ENCODE measurements at regions of chr10 and their contacts with region 1.

Region 1: GRCh38 chr10:15168781-15169554 is 475 bp upstream of the NMT2 start:
- DNase-seq: peak; percentile 51 to 89
- H3K4me3 ChIP-seq: peak overlapping the region; percentile 41; the same call in 1 of the 2 replicates
- H3K27ac ChIP-seq: no peak overlapping the region
- H3K4me1 ChIP-seq: no peaks in the 10 kb centered on the region
- H3K27me3 ChIP-seq: no peaks in the 10 kb centered on the region
- CTCF ChIP-seq: no peak

Region 2: GRCh38 chr10:14878266-14879054 is 290.5 kb before region 1 on chr10 and contains the start of gene SUV39H2:
- CTCF ChIA-PET with region 1: no interaction called
- POLR2A ChIA-PET with region 1: interaction called, 5 read pairs
- intact Hi-C with region 1: loop called (anchors 2 kb)
- DNase-seq: peak; percentile 76 to 96
- H3K4me3 ChIP-seq: peak within 1 kb of the TSS; percentile 67
- H3K27ac ChIP-seq: peak within 1 kb of the TSS; percentile 79
- H3K4me1 ChIP-seq: peaks cover 24% of the 10 kb centered on the region
- H3K27me3 ChIP-seq: no peaks in the 10 kb centered on the region
- CTCF ChIP-seq: no peak
- total RNA-seq, gene SUV39H2: 13.4 and 20.9 TPM in 2 replicates

Region 3: DNA sequence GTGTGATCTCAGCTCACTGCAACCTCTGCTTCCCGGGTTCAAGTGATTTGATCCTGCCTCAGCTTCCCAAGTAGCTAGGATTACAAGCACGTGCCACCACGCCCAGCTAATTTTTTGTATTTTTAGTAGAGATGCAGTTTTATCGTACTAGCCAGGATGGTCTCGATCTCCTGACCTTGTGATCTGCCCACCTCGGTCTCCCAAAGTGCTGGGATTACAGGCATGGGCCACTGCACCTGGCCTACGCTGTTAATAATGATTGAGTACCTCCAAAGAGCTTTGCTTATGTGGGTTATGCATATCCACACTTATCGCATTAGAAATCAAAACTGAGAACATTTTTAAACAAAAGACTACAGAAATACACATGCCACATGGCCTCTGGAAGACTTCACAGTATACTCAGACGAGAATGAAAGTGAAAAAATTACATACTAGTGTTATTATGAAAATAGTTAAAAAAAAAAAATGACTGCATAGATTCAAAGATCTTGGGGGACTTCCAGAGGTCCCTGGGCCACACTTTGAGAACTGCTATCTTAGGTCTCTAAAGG is 46.4 kb before region 1 on chr10:
- CTCF ChIA-PET with region 1: no interaction called
- POLR2A ChIA-PET with region 1: no interaction called
- intact Hi-C with region 1: no loop called
- DNase-seq: no peak
- H3K4me3 ChIP-seq: no peak overlapping the region
- H3K27ac ChIP-seq: no peak overlapping the region
- H3K4me1 ChIP-seq: no peaks in the 10 kb centered on the region
- H3K27me3 ChIP-seq: no peaks in the 10 kb centered on the region
- CTCF ChIP-seq: no peak

Region 4: GRCh38 chr10:15200626-15201025 is 31.7 kb after region 1 on chr10:
- CTCF ChIA-PET with region 1: no interaction called
- POLR2A ChIA-PET with region 1: interaction called, 6 read pairs
- intact Hi-C with region 1: loop called (anchors 1 kb)
- DNase-seq: peak; percentile 14 to 94
- H3K4me3 ChIP-seq: no peak overlapping the region
- H3K27ac ChIP-seq: peak overlapping the region; percentile 72
- H3K4me1 ChIP-seq: peaks cover 28% of the 10 kb centered on the region
- H3K27me3 ChIP-seq: no peaks in the 10 kb centered on the region
- CTCF ChIP-seq: no peak

Measured in PC-9 (cell line).